GM13976 (cell line): ENCODE measurements at regions of chr17 and their contacts with region 1.

Region 1: DNA sequence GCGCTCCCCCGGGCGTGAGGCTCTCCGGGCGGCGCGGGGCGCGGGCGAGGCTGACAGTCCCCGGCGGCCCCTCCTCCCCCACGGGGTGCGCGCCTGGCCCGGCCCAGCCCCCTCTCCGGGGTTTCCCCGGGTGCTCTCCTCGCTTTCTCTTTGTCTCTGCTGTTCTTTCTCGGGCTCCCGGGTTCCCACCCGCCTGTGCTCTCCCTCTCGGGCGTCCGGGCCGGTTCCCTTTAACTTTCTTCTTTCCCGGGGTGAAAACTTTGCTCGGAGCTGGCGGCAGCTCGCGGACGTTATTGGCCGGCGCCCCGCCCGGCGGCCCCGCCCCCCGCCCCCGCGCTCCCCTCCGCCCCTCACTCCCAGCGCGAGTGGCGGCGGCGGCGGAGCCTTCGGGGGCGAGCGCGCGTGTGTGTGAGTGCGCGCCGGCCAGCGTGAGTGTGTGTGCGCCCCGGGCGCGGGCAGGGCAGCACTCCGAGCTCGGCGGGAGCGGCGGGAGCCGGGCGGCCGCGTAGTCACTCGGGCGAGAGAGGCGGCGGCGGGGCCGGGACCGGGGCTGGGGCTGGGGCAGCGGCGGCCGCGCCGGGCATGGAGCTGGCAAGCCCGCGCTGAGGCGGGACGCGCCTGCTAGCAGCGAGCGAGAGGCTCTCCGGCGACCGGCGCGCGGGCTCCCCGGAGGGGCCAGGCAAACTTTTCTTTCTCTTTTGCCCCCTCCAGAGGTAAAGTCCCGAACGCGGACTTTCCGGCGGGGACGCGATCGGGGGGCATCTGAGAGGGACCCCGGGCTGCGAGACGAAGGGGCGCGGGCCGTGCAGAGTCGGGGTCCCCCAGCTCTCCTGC is at the start of gene NTN1:
- DNase-seq: peak; percentile 88
- CTCF ChIP-seq: no peak

Region 2: DNA sequence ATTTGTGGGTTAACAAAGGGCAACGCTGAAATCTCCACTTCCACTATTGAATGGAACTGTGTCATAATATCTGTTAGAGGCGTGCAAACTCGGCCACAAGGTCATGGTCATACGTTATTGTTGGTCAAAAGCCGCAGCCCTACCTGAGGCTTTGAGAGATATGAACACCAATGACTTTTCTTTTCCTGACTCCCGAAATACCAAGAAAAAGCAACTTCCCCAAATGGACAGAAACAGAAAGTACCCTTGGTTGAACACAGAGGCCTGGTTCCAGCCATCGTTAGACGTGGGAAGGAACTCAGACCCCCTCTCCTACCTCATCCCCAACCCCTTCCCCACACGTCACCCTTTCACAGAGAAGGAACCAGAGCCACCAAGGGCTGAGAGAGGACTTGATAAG is 54.4 kb before region 1 on chr17:
- in situ Hi-C with region 1: no loop called
- DNase-seq: no peak
- CTCF ChIP-seq: no peak

Region 3: DNA sequence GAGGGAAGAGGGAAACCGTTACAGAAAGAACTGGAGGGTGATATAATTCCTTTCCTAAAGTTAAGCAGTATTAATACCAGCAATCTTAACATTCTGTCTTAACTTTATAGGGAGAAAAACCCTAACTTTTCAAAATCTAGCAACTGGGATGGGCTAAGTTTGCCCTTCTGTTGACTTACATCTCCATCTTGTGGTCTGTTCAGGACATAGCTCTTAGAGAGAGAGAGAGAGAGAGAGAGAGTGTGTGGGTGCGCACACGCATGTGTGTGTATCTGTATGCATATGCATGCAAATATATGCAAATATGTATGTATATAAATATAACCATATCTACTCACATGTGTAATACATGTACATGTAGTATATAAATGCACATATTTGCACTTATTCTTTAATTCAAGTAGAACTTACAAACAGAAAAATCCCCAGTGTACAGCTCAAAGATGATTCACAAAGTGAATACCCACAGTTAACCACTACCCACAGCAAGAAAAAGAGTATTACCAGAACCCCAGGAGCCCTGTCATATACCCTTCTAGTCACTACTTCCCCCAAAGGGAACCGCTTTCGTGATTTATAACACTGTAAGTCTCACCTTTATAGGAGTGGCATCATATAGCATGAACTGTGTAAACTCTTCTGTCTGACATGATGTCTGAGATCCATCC is 507.8 kb after region 1 on chr17:
- in situ Hi-C with region 1: loop called (anchors 25 kb)
- DNase-seq: peak; percentile 55
- CTCF ChIP-seq: no peak